Sigmoid colon (tissue), 7 donors: ENCODE measurements at regions of chr4 and their contacts with region 1.

Region 1: GRCh38 chr4:118224239-118224829 is 128.5 kb downstream of the PRSS12 start:
- DNase-seq: no peak
- H3K4me3 ChIP-seq: no peak overlapping the region
- H3K27ac ChIP-seq: no peak overlapping the region
- H3K4me1 ChIP-seq: no peaks in the 10 kb centered on the region
- H3K27me3 ChIP-seq: no peaks in the 10 kb centered on the region
- CTCF ChIP-seq: peak in 2 of 4 experiments; percentile 27 to 61
- EP300 ChIP-seq: no peak
- POLR2A ChIP-seq: no peak

Region 2: GRCh38 chr4:116358588-116359222 is 1865.6 kb before region 1 on chr4:
- intact Hi-C with region 1: loop called (anchors 10 kb)
- DNase-seq: no peak
- H3K4me3 ChIP-seq: no peak overlapping the region
- H3K27ac ChIP-seq: no peak overlapping the region
- H3K4me1 ChIP-seq: no peaks in the 10 kb centered on the region
- H3K27me3 ChIP-seq: no peaks in the 10 kb centered on the region
- CTCF ChIP-seq: peak in 3 of 4 experiments; percentile 20 to 43 (median 28)
- EP300 ChIP-seq: no peak
- POLR2A ChIP-seq: no peak

Region 3: DNA sequence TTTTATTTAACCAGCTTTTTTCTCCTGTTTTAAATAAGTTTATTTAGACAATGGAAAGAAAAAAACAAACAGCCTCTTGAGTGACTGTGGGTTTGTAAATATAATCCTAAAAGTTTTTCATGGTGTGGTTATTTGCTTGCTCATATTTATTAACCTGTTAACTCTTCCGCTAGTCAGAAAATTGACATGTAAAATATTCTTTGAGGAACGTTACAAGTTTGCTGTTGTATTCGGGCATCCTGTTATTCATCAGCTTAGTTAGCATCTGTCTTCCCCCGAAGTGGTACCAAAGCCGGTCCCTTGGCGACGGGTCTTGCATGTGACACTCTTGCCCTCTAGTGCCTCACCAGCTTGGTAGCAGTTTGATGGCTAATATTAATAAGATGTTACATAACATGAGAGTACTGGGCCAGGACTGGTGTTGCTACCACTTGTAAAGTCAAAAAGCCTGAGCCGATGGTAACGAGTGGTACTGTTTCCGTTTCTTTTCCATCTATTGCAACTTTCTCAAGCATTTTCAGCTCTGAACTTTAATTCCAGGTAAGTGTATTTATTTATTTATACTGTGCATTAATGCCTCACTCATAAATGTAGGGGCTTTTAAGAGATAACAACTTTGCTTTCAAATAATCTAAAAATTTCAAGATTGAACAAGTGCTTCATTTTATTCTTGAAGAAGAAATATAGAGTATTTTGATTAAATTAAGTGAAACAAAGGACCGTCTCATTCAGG is 190.1 kb before region 1 on chr4 and contains the start of gene NDST3:
- intact Hi-C with region 1: no loop called
- DNase-seq: no peak
- H3K4me3 ChIP-seq: peak within 1 kb of the TSS; percentile 16 to 54 (median 48)
- H3K27ac ChIP-seq: no peak within 1 kb of the TSS
- H3K4me1 ChIP-seq: peaks cover 0 to 15% (median 11%) of the 10 kb centered on the region in 4 donors
- H3K27me3 ChIP-seq: peaks cover 0 to 54% (median 18%) of the 10 kb centered on the region in 3 donors
- CTCF ChIP-seq: no peak
- EP300 ChIP-seq: no peak
- POLR2A ChIP-seq: no peak
- total RNA-seq, gene NDST3: under 0.01 TPM in 2 of 4 donors, not detected in the others